ENCODE measurements at regions of chr17 and their contacts with region 1.

Region 1: DNA sequence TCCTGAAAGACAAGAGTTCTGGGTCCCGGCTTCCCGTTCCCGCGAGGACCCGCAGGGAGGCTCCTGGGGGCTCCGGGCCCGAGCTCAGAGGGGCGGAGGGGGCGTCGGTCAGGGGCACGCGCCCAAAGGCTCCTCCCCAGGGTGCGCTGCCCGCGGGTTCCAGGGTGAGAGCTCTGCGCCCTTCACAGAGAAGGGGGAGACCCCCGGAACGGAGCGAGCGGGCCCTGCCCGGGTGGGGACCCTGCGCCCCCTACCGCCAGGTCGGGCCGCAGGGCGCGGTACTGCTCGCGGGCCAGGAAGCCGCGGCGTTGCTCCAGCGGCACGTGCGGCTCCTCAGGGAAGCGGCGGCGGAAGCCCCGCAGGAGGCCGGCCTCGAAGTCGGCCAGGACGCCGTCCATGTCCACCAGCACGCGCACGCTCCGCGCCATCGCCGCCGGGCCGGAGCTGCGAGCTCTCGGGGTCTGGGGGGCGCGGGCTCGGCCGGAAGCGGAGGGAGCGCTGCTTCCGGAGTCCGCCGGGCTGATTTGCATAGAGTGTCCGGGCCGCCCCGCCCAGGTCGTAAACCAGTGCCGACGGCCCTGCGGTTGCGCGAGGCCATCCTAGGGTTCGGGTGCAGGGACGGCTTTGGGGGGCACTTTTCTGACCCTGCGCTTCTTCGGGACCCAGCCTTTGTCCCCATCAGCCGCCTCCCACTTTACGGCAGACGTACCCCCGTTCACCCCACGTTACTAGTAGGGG is at the start of gene NT5C:
- DNase-seq: peak; percentile 88 to 92
- ATAC-seq: peak; percentile 91 to 93 (median 92)
- H3K4me3 ChIP-seq: peak within 1 kb of the TSS; percentile 94
- H3K27ac ChIP-seq: peak within 1 kb of the TSS; percentile 93
- H3K4me1 ChIP-seq: peaks cover 5% of the 10 kb centered on the region
- H3K27me3 ChIP-seq: no peaks in the 10 kb centered on the region
- CTCF ChIP-seq: peak; percentile 68
- total RNA-seq, gene NT5C: 16.4 to 44.2 (median 29.4) TPM

Region 2: DNA sequence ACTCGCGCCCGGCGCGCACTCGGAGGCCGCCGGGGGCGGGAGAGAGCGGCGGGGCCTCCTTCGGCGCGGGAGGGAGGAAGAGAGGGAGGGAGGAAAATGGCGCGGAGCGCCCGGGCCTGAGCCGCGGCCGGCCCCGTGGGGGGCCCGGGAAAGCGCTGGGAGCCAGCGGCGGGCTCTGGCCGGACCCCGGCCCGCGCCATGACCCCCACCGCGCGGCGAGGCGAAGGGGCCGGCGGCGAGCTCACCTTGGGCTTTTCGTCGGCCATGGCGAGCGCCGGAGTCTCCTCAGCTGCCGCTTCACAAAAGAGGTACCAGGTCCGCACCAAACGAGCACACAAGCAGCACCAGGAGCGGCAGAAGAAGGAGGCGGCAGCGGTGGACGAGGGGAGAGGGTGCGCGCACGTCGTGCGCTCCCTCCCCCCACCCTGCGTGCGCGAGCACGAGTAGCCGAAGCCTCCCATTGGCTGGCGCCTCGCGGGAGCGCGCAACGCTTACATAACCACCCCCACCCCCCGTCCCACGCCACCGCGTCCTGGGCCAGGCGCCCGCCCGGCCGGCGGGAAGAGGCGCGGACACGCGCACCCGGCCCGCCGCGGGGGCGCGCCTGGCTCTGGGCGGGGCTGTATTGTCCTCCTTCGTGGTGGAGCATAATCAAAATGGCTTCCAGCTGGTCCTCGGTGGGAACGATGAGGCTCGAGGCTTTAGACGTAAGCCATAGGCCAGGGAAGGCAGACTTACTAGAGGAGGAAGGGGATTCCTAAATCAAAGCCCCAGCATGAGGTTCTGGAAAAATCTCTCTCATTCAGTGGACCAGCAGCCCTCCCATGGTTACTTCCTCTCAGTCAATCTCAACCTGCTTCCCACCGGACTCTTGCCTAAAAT is 51.4 kb after region 1 on chr17 and contains the start of gene SUMO2:
- intact Hi-C with region 1: loop called in 1 of 2 experiments (anchors 5 kb)
- DNase-seq: peak; percentile 95 to 98
- ATAC-seq: peak; percentile 92 to 98 (median 97)
- H3K4me3 ChIP-seq: peak within 1 kb of the TSS; percentile 99
- H3K27ac ChIP-seq: peak within 1 kb of the TSS; percentile 99
- H3K4me1 ChIP-seq: peaks cover 21% of the 10 kb centered on the region
- H3K27me3 ChIP-seq: no peaks in the 10 kb centered on the region
- CTCF ChIP-seq: peak; percentile 38
- total RNA-seq, gene SUMO2: 161 to 203 (median 185) TPM

Measured in psoas muscle (tissue), 8 donors.